SK-N-SH (cell line): ENCODE measurements at regions of chr1 and their contacts with region 1.

Region 1: DNA sequence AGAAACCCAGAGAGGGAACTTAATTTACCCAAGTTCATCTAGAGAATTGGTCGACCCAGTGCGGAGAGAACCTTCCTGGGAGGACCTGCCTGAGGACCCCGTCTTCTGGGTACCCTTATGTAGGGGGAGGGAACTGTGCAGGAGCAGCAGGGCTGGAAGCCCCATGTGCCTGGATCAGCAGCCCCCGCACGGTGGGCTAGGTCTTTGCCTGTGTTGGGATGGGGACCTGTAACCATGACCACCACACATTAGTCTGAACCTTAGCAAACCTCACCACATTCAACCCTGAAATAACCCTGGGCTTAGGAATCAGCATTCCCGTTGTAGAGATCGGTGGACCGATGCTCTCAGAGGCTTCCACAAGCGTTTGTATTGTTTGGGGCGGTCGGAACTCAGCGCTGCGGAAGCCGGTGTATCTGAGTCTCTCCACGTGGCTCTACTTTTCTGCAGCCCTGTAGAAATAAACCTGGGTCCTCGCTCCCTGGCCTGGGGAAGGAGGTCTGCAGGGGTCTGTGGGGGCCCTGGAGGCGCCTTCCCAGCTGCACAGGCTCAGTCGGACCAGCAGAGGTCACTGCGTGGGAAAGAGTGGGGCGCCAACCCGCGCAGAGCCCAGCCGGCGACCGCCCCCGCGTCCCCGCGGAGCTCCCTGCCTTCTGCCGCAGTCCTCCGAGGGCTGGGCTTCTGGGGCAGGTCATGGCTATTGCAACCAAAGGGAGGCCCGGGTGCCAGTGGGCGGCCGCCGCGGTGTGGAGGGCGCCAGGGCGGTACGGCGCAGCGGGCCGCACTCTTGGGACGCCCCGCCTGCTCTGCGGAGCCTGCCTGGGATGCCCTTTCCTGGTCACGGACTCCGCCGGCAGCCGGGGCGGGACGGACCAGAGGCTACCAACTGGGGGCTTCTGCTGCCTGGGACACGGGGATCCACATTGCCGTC is 36.2 kb upstream of the KCNA10 start:
- DNase-seq: peak; percentile 89
- H3K4me3 ChIP-seq: peak overlapping the region; percentile 42 to 44; a peak in 3 of 4 replicates
- H3K27ac ChIP-seq: no peak overlapping the region
- H3K4me1 ChIP-seq: peaks cover 0 to 9% of the 10 kb centered on the region in 2 experiments; a peak in 1 of 4 replicates
- H3K27me3 ChIP-seq: peaks cover 15% of the 10 kb centered on the region; the same call in 1 of the 2 replicates
- CTCF ChIP-seq: peak; percentile 59
- EP300 ChIP-seq: no peak
- RAD21 ChIP-seq: peak; percentile 42

Region 2: GRCh38 chr1:110281363-110282290 is 273.5 kb before region 1 on chr1:
- CTCF ChIA-PET with region 1: no interaction called
- POLR2A ChIA-PET with region 1: no interaction called
- DNase-seq: peak; percentile 47
- H3K4me3 ChIP-seq: no peak overlapping the region
- H3K27ac ChIP-seq: no peak overlapping the region; a peak in 1 of 4 replicates
- H3K4me1 ChIP-seq: peaks cover 0 to 15% of the 10 kb centered on the region in 2 experiments; a peak in 1 of 4 replicates
- H3K27me3 ChIP-seq: no peaks in the 10 kb centered on the region
- CTCF ChIP-seq: no peak
- EP300 ChIP-seq: peak in 1 of 2 experiments; percentile 20; a peak in 1 of 4 replicates
- RAD21 ChIP-seq: no peak

Region 3: DNA sequence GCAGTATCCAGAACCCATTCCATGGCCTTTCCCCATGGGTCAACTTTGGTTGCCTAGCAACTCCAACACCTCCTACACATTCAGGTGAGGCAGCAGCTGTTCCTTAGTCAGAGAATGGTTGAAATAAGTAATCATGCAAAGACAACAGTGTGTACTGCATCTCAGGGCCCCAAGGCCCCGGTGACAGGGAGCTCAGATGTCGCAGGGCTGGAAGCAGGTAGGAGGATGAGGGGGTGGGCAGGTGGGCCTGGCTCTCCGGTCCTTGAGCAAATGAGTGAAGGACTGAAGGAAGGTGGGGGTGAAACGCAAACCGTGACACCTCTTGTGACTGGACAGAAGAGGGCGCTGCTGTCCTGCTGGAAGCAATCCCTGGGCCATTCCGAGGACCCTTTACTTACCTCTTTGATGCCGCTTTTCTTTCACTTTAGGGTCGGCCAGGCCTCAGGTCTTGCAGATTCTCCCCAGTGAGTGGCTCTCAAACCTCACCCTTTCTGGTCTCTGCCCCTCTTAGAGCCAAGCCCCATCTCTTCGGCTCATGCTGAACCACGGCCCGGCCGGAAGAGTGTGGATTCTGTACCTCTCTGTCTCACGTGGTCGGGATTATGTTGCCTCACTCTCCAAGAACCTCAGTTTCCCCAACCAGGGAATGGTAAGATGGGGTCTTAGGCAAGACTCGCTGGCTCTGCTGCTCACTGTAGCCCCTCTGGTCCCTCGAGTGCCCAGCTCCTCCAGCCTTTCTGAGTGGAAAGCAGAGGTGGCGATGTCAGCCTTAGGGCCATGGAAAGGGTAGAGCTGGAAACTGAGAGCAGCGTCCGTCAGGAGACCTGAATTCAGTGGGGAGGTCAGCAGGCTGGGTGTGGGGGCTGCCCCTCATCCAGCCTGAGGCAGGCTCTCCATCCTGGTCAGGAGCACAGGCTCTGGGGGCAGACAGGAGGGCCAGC is 30.6 kb before region 1 on chr1:
- CTCF ChIA-PET with region 1: interaction called, 88 read pairs
- POLR2A ChIA-PET with region 1: no interaction called
- DNase-seq: peak; percentile 80
- H3K4me3 ChIP-seq: no peak overlapping the region; a peak in 1 of 4 replicates
- H3K27ac ChIP-seq: no peak overlapping the region
- H3K4me1 ChIP-seq: no peaks in the 10 kb centered on the region; a peak in 1 of 4 replicates
- H3K27me3 ChIP-seq: no peaks in the 10 kb centered on the region; the same call in 1 of the 2 replicates
- CTCF ChIP-seq: peak; percentile 65
- EP300 ChIP-seq: no peak
- RAD21 ChIP-seq: peak; percentile 90

Region 4: DNA sequence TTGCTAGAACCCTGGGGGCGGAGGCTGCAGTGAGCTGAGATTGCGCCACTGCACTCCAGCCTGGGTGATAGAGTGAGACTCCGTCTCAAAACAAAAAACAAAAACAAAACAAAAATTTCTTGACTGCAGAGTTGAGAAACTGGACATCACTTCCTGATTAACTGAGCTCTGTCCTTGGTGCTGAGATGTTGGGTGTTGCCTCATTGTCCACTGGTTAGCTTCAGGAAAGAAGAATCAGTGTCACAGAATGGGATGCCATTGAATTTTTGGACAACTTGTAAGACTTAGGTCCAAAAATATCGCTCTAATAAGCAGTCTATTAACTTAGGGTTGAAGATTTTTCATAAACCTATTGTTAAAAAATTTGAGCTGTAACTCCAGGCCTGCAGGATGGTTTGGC is 12.4 kb before region 1 on chr1:
- CTCF ChIA-PET with region 1: interaction called, 48 read pairs
- POLR2A ChIA-PET with region 1: no interaction called
- DNase-seq: no peak
- H3K4me3 ChIP-seq: no peak overlapping the region
- H3K27ac ChIP-seq: no peak overlapping the region
- H3K4me1 ChIP-seq: no peaks in the 10 kb centered on the region
- H3K27me3 ChIP-seq: no peaks in the 10 kb centered on the region
- CTCF ChIP-seq: no peak
- EP300 ChIP-seq: no peak
- RAD21 ChIP-seq: no peak

Region 5: DNA sequence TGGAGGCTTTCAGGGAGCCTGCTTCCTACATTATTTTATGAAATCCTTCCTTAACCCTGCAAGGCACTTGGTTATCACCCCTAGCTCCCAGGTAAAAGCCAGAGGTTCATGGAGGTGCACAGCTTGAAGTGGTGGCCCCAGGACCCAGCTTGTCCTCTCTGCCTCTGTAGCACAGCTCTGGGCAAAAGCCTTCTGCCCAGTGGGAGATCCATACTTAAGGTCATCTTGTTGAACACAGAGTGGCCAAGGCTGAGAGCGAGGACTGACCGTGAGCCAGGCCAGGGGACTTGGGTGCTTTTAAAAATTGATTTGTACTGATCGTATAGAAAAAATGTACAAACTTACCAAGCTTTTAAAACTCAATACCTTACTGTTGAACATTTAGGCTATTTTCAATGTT is 17.6 kb after region 1 on chr1:
- CTCF ChIA-PET with region 1: interaction called, 38 read pairs
- POLR2A ChIA-PET with region 1: no interaction called
- DNase-seq: no peak
- H3K4me3 ChIP-seq: no peak overlapping the region
- H3K27ac ChIP-seq: no peak overlapping the region
- H3K4me1 ChIP-seq: no peaks in the 10 kb centered on the region
- H3K27me3 ChIP-seq: no peaks in the 10 kb centered on the region; the same call in 1 of the 2 replicates
- CTCF ChIP-seq: no peak
- EP300 ChIP-seq: no peak
- RAD21 ChIP-seq: no peak

Region 6: DNA sequence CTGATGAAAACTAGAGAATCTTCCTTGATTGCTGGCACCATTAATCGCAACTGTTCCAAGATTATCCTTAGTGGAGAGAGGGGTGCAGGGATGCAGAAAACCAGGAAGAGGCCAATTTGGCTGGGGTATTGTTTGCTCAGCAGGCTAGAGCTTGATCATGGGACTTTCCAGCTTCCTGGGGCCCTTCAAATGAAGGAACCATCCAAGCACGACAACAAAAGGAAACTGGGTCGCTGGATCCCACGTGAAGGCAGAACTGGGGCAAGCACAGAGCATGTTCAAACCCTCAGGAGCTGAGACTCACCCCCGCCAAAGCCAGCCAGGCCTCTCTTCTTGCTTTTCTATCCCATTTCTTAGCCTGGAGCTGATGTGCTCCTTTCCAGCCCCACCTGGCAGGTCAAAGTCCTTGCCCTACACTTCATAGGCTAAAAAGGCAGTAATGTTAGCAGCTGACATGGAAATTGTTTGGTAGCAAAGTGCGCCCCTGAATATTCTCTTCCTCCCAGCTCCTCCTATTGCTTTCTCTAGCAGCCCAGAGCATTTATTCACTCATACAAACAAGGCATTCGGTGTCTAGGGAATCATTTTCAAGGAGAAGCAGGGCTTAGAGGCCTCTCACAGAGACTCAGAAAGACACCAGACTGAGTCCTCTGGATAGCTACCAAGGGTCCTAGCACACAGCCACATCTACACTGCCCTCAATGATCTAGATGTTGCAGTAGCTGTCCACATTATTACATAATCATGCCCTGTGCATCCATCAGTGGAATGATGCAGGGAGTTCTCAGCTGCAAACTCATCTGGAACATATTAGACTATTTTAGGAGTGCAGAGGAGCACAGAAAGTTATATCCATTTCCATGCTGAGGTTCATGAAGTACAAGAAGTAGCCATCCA is 39.6 kb after region 1 on chr1:
- CTCF ChIA-PET with region 1: interaction called, 17 read pairs
- POLR2A ChIA-PET with region 1: no interaction called
- DNase-seq: no peak
- H3K4me3 ChIP-seq: no peak overlapping the region
- H3K27ac ChIP-seq: no peak overlapping the region
- H3K4me1 ChIP-seq: no peaks in the 10 kb centered on the region
- H3K27me3 ChIP-seq: no peaks in the 10 kb centered on the region; the same call in 1 of the 2 replicates
- CTCF ChIP-seq: no peak
- EP300 ChIP-seq: no peak
- RAD21 ChIP-seq: no peak

Region 7: GRCh38 chr1:110619412-110620249 is 64.5 kb after region 1 on chr1:
- CTCF ChIA-PET with region 1: interaction called, 148 read pairs
- POLR2A ChIA-PET with region 1: no interaction called
- DNase-seq: peak; percentile 88
- H3K4me3 ChIP-seq: peak overlapping the region in 1 of 2 experiments; percentile 25; a peak in 1 of 4 replicates
- H3K27ac ChIP-seq: no peak overlapping the region
- H3K4me1 ChIP-seq: peaks cover 0 to 3% of the 10 kb centered on the region in 2 experiments; a peak in 1 of 4 replicates
- H3K27me3 ChIP-seq: peaks cover 11% of the 10 kb centered on the region
- CTCF ChIP-seq: peak; percentile 92
- EP300 ChIP-seq: no peak
- RAD21 ChIP-seq: peak; percentile 73